Calu3 (cell line): ENCODE measurements at regions of chr22 and their contacts with region 1.

Region 1: GRCh38 chr22:37260901-37261336 is 16.9 kb upstream of the RAC2 start:
- DNase-seq: peak; percentile 68
- H3K4me3 Mint-ChIP-seq: no peak overlapping the region
- H3K27ac Mint-ChIP-seq: no peak overlapping the region
- H3K4me1 Mint-ChIP-seq: peaks cover 30% of the 10 kb centered on the region
- H3K27me3 Mint-ChIP-seq: peaks cover 31% of the 10 kb centered on the region
- CTCF ChIP-seq: peak; percentile 79

Region 2: GRCh38 chr22:36781656-36782627 is 479.0 kb before region 1 on chr22:
- CTCF ChIA-PET with region 1: no interaction called
- intact Hi-C with region 1: loop called (anchors 5 kb)
- DNase-seq: peak; percentile 89
- H3K4me3 Mint-ChIP-seq: no peak overlapping the region
- H3K27ac Mint-ChIP-seq: no peak overlapping the region
- H3K4me1 Mint-ChIP-seq: no peaks in the 10 kb centered on the region
- H3K27me3 Mint-ChIP-seq: peaks cover 75% of the 10 kb centered on the region
- CTCF ChIP-seq: peak; percentile 95

Region 3: DNA sequence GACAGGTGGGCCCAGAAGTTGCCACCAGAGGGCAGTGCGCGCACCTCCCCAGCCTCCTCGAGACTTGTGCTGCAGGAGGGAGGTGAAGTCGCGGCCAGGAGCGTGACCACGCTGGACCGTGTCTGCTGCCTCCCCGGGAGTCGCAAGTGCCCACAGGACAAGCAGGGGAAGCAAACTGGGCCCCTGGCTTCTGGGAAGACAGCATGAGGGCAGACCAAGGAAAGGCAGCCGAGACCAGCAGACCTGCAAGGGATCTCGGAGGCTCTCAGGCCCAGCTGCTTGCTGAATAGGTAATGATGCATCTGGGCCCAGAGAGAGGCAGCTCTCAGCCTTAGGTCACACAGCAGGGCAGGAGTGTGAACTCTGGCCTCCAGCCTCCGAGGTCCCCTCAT is 94.2 kb before region 1 on chr22:
- CTCF ChIA-PET with region 1: no interaction called
- intact Hi-C with region 1: loop called (anchors 10 kb)
- DNase-seq: peak; percentile 86
- H3K4me3 Mint-ChIP-seq: no peak overlapping the region
- H3K27ac Mint-ChIP-seq: no peak overlapping the region
- H3K4me1 Mint-ChIP-seq: peaks cover 20% of the 10 kb centered on the region
- H3K27me3 Mint-ChIP-seq: peaks cover 46% of the 10 kb centered on the region
- CTCF ChIP-seq: peak; percentile 91

Region 4: DNA sequence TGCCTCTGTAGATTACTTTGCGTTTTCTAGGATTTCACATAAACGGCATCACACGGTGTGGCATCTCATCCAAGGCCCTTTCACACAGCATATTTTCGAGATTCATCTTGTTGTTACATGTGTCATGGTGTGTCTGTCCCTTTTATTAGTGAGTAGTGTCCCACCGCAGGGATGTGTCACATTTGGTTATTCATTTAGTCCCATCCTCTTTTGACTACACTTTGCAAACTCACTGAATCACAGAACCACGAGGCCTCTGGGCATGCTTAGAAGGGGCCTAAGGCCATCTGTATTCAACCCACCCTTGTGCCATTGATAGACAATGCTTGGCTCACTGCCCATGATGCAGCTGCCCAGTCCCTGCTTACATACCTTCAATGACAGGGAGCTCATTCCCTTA is 12.7 kb before region 1 on chr22:
- CTCF ChIA-PET with region 1: interaction called, 11 read pairs
- intact Hi-C with region 1: no loop called
- DNase-seq: no peak
- H3K4me3 Mint-ChIP-seq: no peak overlapping the region
- H3K27ac Mint-ChIP-seq: no peak overlapping the region
- H3K4me1 Mint-ChIP-seq: peaks cover 9% of the 10 kb centered on the region
- H3K27me3 Mint-ChIP-seq: no peaks in the 10 kb centered on the region
- CTCF ChIP-seq: no peak